B cell (primary cell): ENCODE measurements at regions of chr3 and their contacts with region 1.

Region 1: DNA sequence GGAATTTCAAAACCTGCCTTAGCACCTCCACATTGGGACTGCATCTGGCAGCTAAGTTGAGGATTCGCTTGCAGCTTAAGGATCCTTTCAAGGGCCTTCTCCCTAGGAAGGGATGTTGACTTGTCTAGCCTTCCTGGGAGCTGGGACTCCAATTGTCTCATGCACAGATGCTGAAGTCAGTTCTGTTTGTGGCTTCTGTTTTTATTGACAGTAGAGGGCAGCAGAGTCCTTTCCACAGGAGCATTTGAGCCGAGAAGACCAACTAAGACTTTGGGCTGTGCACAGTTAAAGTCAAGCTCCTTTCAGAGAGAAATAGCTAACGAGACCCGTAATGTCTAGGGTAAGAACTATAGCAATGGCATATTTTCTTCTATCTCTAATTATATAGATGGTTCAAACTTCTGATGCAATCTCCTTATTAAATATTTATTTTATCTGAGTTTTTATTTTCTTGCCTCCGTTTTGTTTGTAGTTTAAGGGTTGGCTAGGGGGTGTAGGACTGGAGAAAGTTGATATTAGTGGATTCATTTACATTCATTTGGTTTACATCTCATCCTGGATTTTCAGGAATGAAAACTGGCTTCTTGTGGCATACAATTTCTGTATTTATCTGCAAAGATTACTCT is 59.7 kb upstream of the KBTBD8 start:
- DNase-seq: peak; percentile 63
- ATAC-seq: peak; percentile 51
- H3K4me3 ChIP-seq: no peak overlapping the region
- H3K4me3 Mint-ChIP-seq: no peak overlapping the region
- H3K27ac ChIP-seq: no peak overlapping the region
- H3K27ac Mint-ChIP-seq: no peak overlapping the region
- H3K4me1 ChIP-seq: no peaks in the 10 kb centered on the region
- H3K4me1 Mint-ChIP-seq: no peaks in the 10 kb centered on the region
- H3K27me3 ChIP-seq: peaks cover 0 to 9% (median 5%) of the 10 kb centered on the region in 4 experiments
- H3K27me3 Mint-ChIP-seq: peaks cover 28% of the 10 kb centered on the region
- CTCF ChIP-seq: peak; percentile 87

Region 2: DNA sequence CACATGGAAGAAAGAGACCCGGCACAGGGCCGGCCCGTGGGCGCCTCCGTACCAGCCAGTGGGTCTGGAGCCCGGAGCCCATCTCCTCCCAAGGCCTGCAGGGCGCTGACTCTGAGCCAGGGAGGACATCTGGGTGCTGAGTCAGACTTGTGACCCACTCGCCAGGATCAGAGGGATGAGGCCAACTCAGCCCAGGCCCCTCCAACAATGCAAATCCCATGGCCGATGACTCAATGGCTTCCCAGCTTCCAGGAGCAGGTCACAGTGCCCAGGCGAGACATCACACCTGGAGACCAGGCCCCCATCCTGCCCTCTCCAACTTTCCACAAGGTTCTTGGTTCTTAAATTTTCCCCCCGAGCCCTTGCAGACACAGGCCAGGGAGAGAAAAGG is 532.8 kb before region 1 on chr3:
- CTCF ChIA-PET with region 1: no interaction called
- POLR2A ChIA-PET with region 1: no interaction called
- intact Hi-C with region 1: no loop called
- DNase-seq: no peak
- ATAC-seq: no peak
- H3K4me3 ChIP-seq: no peak overlapping the region
- H3K4me3 Mint-ChIP-seq: no peak overlapping the region
- H3K27ac ChIP-seq: no peak overlapping the region
- H3K27ac Mint-ChIP-seq: no peak overlapping the region
- H3K4me1 ChIP-seq: no peaks in the 10 kb centered on the region
- H3K4me1 Mint-ChIP-seq: no peaks in the 10 kb centered on the region
- H3K27me3 ChIP-seq: no peaks in the 10 kb centered on the region
- H3K27me3 Mint-ChIP-seq: no peaks in the 10 kb centered on the region
- CTCF ChIP-seq: no peak

Region 3: DNA sequence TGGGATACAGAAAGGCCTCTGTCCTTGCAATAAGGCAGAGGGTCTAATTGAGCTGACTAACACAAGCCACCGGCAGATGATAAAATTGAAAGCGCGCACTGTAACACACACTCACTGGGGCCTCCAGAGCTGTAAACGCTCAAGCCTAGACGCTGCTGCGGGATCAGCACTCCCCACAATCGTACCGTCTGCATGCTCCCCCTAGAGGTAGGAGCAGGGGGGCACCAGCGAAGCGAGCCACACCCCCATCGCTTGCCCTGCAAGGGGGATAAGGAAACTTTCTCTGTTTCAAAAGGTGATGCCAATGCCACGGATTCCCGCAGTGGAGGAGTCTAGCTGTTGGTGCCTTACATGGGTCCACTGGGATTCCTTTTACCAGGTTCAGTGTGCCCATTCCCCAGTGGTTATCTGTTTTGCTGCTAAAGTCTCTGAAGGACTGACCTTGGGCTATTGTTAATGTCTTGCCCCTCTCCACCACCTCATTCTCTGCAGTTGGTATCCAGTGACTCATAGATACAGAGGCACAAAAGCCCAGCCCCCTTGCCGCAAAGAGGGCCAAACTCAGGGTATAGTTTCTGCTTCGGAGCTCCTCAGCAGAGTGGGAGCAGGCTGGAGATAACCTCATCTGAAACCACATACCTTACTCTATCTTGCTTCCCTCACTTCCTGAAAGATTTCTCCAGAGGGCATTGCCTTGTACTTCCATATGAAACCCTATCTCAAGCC is 79.6 kb before region 1 on chr3:
- CTCF ChIA-PET with region 1: no interaction called
- POLR2A ChIA-PET with region 1: no interaction called
- intact Hi-C with region 1: no loop called
- DNase-seq: no peak
- ATAC-seq: no peak
- H3K4me3 ChIP-seq: no peak overlapping the region
- H3K4me3 Mint-ChIP-seq: no peak overlapping the region
- H3K27ac ChIP-seq: no peak overlapping the region
- H3K27ac Mint-ChIP-seq: no peak overlapping the region
- H3K4me1 ChIP-seq: peaks cover 0 to 4% of the 10 kb centered on the region in 2 donors
- H3K4me1 Mint-ChIP-seq: peaks cover 9% of the 10 kb centered on the region
- H3K27me3 ChIP-seq: no peaks in the 10 kb centered on the region
- H3K27me3 Mint-ChIP-seq: no peaks in the 10 kb centered on the region
- CTCF ChIP-seq: no peak

Region 4: GRCh38 chr3:67037615-67038014 is 99.2 kb after region 1 on chr3:
- CTCF ChIA-PET with region 1: interaction called, 14 read pairs
- POLR2A ChIA-PET with region 1: no interaction called
- intact Hi-C with region 1: loop called (anchors 1 kb)
- DNase-seq: peak; percentile 42
- ATAC-seq: no peak
- H3K4me3 ChIP-seq: no peak overlapping the region
- H3K4me3 Mint-ChIP-seq: no peak overlapping the region
- H3K27ac ChIP-seq: no peak overlapping the region
- H3K27ac Mint-ChIP-seq: no peak overlapping the region
- H3K4me1 ChIP-seq: peaks cover 4 to 6% of the 10 kb centered on the region in 2 donors
- H3K4me1 Mint-ChIP-seq: peaks cover 6% of the 10 kb centered on the region
- H3K27me3 ChIP-seq: no peaks in the 10 kb centered on the region
- H3K27me3 Mint-ChIP-seq: no peaks in the 10 kb centered on the region
- CTCF ChIP-seq: no peak

Region 5: DNA sequence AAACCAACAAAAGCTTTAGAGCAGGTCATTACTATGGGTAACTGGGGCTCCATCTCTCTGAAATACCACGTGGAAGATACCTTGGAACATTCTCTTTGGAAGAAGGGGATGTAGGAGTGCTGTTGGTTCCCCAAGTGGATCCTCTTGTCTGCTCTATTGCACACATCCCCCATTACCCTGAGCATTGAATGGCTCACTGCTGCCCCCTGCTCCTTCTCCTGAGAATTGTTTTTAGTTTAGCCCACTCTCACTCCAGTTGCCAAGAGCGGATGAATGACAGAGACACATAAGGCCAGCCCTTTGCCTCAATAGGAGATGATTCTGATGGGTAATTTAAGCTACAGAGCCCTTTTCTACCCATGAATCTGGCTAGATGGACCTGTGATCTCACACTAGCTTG is 851.6 kb after region 1 on chr3:
- CTCF ChIA-PET with region 1: interaction called, 4 read pairs
- POLR2A ChIA-PET with region 1: no interaction called
- intact Hi-C with region 1: loop called (anchors 1 kb)
- DNase-seq: peak; percentile 60
- ATAC-seq: peak; percentile 58
- H3K4me3 ChIP-seq: no peak overlapping the region
- H3K4me3 Mint-ChIP-seq: no peak overlapping the region
- H3K27ac ChIP-seq: no peak overlapping the region
- H3K27ac Mint-ChIP-seq: no peak overlapping the region
- H3K4me1 ChIP-seq: no peaks in the 10 kb centered on the region
- H3K4me1 Mint-ChIP-seq: no peaks in the 10 kb centered on the region
- H3K27me3 ChIP-seq: no peaks in the 10 kb centered on the region
- H3K27me3 Mint-ChIP-seq: peaks cover 6% of the 10 kb centered on the region
- CTCF ChIP-seq: peak; percentile 73

Region 6: DNA sequence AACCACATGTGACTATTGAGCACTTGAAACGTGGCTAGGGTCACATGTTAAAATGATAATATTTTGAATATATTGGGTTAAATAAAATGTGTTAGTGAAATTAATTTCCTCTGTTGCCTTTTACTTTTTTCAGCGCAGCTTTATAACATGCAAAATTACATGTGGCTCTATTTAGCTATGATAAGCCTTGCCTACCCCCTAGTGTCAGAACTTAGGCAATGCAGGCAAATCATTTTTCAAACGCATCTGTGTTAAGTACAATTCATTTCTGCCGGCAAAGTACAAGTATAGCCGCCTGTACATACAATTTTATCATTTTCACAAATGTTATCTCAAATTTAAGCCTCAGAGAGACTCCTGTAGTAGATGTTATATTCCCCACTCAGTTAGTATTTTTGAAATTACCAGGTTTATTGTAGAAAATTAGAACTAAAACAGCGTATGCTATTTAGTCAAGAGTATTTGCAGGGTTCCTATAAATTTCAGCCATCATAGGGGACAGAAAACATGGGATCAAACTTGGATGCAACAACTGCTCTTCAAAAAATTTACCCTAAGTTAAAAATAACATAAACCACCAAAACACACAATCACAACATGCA is 1937.8 kb after region 1 on chr3:
- CTCF ChIA-PET with region 1: interaction called, 19 read pairs
- POLR2A ChIA-PET with region 1: no interaction called
- intact Hi-C with region 1: loop called (anchors 1 kb)
- DNase-seq: peak; percentile 65
- ATAC-seq: peak; percentile 51
- H3K4me3 ChIP-seq: no peak overlapping the region
- H3K4me3 Mint-ChIP-seq: no peak overlapping the region
- H3K27ac ChIP-seq: no peak overlapping the region
- H3K27ac Mint-ChIP-seq: no peak overlapping the region
- H3K4me1 ChIP-seq: no peaks in the 10 kb centered on the region
- H3K4me1 Mint-ChIP-seq: no peaks in the 10 kb centered on the region
- H3K27me3 ChIP-seq: no peaks in the 10 kb centered on the region
- H3K27me3 Mint-ChIP-seq: peaks cover 35% of the 10 kb centered on the region
- CTCF ChIP-seq: peak; percentile 98

Region 7: DNA sequence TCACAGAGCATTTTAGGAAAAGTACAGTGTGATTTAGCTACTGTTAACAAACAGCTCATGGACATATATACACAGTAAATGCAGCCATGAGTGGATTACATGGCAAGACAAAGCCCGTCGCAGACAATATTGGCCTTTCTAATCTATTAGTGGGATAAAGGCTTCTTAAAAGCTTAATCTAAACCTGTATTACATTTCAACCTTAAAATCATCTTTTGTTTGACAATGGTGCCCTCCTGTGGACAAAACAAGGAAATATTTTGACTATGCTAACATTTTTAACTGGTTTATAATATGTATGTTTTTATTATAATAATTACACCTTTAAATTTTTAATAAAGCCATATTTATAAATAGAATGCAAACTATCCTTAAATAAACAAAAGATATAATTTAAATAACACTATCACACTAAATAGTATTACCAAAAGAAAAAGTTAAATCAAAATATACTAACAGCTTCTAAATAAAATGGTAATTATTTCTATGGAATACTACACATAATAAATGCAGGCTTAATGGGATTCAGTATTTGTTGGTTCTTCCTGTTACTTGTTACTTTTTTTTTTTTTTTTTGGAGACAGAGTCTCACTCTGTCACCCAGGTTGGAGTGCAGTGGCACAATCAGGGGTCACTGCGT is 1955.3 kb after region 1 on chr3:
- CTCF ChIA-PET with region 1: interaction called, 19 read pairs
- POLR2A ChIA-PET with region 1: no interaction called
- intact Hi-C with region 1: loop called (anchors 1 kb)
- DNase-seq: peak; percentile 45
- ATAC-seq: no peak
- H3K4me3 ChIP-seq: no peak overlapping the region
- H3K4me3 Mint-ChIP-seq: no peak overlapping the region
- H3K27ac ChIP-seq: no peak overlapping the region
- H3K27ac Mint-ChIP-seq: no peak overlapping the region
- H3K4me1 ChIP-seq: no peaks in the 10 kb centered on the region
- H3K4me1 Mint-ChIP-seq: no peaks in the 10 kb centered on the region
- H3K27me3 ChIP-seq: no peaks in the 10 kb centered on the region
- H3K27me3 Mint-ChIP-seq: peaks cover 16% of the 10 kb centered on the region
- CTCF ChIP-seq: peak; percentile 77